Psoas muscle (tissue), 8 donors: ENCODE measurements at regions of chr17 and their contacts with region 1.

Region 1: GRCh38 chr17:46184696-46185095 is 8.5 kb downstream of the KANSL1 start:
- DNase-seq: no peak
- ATAC-seq: no peak
- H3K4me3 ChIP-seq: no peak overlapping the region
- H3K27ac ChIP-seq: no peak overlapping the region
- H3K4me1 ChIP-seq: peaks cover 73% of the 10 kb centered on the region
- H3K27me3 ChIP-seq: no peaks in the 10 kb centered on the region
- CTCF ChIP-seq: no peak

Region 2: DNA sequence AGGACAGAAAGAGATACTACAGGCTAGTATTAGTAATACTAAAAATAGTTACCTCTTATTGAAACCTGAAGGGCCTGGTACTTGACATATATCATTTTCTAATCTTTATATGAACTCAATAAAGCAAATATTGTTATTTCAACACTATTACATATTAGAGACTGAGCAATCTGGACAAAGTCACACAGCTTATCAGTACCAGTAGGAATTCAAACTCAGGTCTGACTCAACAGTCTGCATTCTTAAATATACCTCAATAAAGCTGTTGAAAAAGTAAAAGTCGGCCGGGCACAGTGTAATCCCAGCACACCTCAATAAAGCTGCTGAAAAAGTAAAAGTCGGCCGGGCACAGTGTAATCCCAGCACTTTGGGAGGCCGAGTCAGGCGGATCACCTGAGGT is 58.9 kb before region 1 on chr17:
- intact Hi-C with region 1: loop called (anchors 5 kb)
- DNase-seq: no peak
- ATAC-seq: no peak
- H3K4me3 ChIP-seq: no peak overlapping the region
- H3K27ac ChIP-seq: no peak overlapping the region
- H3K4me1 ChIP-seq: peaks cover 85% of the 10 kb centered on the region
- H3K27me3 ChIP-seq: no peaks in the 10 kb centered on the region
- CTCF ChIP-seq: no peak

Region 3: GRCh38 chr17:46202424-46202823 is 17.7 kb after region 1 on chr17:
- intact Hi-C with region 1: no loop called
- DNase-seq: no peak
- ATAC-seq: no peak
- H3K4me3 ChIP-seq: no peak overlapping the region
- H3K27ac ChIP-seq: no peak overlapping the region
- H3K4me1 ChIP-seq: peaks cover 14% of the 10 kb centered on the region
- H3K27me3 ChIP-seq: no peaks in the 10 kb centered on the region
- CTCF ChIP-seq: no peak

Region 4: GRCh38 chr17:46216682-46217081 is 32.0 kb after region 1 on chr17:
- intact Hi-C with region 1: no loop called
- DNase-seq: no peak
- ATAC-seq: no peak
- H3K4me3 ChIP-seq: no peak overlapping the region
- H3K27ac ChIP-seq: no peak overlapping the region
- H3K4me1 ChIP-seq: peaks cover 15% of the 10 kb centered on the region
- H3K27me3 ChIP-seq: no peaks in the 10 kb centered on the region
- CTCF ChIP-seq: no peak

Region 5: DNA sequence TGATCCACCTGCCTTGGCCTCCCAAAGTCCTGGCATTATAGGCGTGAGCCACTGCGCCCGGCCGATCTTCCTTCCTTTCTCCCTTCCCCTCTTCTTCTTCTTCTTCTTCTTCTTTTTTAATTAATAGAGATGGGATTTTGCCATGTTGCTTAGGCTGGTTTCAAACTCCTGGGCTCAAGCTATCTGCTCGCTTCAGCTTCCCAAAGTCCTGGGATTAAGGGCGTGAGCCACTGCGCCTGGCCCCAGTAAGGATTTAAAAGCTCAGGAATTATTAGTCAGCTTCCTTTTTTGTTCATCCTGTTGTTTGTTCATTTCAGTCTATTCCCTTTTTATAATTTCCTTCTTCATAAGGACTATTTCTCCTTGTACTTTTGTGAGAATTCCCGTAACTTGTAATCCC is 77.6 kb after region 1 on chr17:
- intact Hi-C with region 1: no loop called
- DNase-seq: no peak
- ATAC-seq: no peak
- H3K4me3 ChIP-seq: no peak overlapping the region
- H3K27ac ChIP-seq: no peak overlapping the region
- H3K4me1 ChIP-seq: peaks cover 5% of the 10 kb centered on the region
- H3K27me3 ChIP-seq: no peaks in the 10 kb centered on the region
- CTCF ChIP-seq: no peak